ENCODE measurements at regions of chr7 and their contacts with region 1.

Region 1: DNA sequence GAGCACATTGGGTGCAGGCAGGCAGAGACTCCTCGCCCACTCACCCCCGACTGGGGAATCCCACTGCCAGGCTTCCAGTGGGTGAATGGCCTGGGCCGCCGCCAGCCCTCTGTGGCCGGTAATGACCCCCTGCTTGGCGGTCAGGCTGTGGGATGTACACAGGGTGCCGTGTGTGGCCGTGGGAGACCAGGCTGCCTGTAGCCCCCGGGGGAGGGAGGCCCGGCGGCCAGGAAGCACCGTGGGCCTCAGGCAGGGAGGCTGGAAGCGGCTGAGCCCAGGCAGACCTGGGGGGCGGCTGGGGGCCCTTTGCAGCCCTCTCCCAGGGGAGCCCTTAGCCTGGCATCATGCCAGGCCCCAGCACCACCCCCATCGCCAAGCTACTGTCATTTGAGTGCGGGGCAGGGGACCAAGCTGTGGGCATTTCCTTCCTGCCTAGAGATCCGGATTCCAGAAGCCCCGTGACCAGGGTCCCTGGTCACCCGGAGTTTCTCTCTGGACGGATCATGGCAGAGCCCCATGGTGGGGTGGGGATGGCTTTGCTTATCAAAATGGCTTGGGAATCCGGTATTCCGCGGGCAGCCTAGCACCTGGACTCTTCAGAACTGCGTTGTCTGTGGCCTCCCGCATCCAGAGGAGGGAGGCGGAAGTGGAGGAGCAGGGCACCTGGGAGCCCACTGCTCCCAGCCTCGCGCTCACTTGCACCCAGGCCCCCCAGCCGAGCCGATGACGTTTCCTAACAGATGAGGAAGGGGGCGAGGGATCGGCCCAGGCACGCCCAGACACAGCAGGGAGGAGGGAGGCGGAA is 1.1 kb downstream of the TTYH3 start:
- DNase-seq: no peak
- H3K4me3 ChIP-seq: peak overlapping the region; percentile 59 to 99 (median 82)
- H3K27ac ChIP-seq: 0 out of 2 replicates have a peak overlapping the region, but pooled peaks have one; percentile 12
- H3K4me1 ChIP-seq: peaks cover 0 to 29% (median 13%) of the 10 kb centered on the region in 4 experiments; a peak in 6 of 7 replicates
- H3K27me3 ChIP-seq: no peaks in the 10 kb centered on the region
- CTCF ChIP-seq: no peak
- EP300 ChIP-seq: no peak
- POLR2A ChIP-seq: no peak
- RAD21 ChIP-seq: no peak

Region 2: DNA sequence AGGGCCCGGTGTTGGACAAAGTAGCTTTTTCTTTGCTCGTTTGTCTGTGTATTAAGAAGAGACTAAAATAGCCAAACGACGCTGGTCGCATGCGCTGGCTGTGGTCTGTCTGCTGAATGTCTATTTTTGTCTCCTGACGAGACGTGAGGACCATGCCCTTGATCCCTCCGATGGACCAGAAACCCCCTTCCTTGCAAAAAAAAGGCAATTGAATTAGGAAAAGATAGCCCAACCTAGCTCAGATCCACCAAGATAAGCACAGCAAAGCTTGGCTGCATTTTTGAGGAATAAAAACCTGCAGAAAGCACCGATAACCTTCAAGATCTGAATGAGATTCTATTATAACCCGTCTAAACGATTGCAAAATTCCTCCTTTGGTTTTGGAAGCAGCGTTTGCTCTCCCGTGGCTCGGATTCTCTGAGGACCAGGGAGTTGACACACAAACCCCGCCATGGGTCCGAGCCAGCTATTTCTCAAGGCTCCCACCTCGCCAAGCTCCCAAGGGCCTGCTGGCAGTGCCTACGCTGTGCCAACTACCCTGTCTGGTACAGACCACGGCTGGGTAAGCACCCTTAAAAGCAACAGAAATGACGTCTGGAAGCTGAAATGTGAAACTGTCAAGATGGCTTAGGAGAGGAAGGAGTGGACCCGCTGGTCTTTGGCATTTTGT is 18.9 kb before region 1 on chr7:
- CTCF ChIA-PET with region 1: interaction called, 25 read pairs
- POLR2A ChIA-PET with region 1: interaction called, 48 read pairs
- DNase-seq: no peak
- H3K4me3 ChIP-seq: no peak overlapping the region
- H3K27ac ChIP-seq: no peak overlapping the region
- H3K4me1 ChIP-seq: peaks cover 0 to 32% (median 17%) of the 10 kb centered on the region in 4 experiments; a peak in 6 of 7 replicates
- H3K27me3 ChIP-seq: 0 out of 7 replicates have a peak, but pooled peaks cover 0 to 2% (median 0%) of the 10 kb centered on the region in 4 experiments
- CTCF ChIP-seq: no peak
- EP300 ChIP-seq: no peak
- POLR2A ChIP-seq: no peak
- RAD21 ChIP-seq: no peak

Region 3: DNA sequence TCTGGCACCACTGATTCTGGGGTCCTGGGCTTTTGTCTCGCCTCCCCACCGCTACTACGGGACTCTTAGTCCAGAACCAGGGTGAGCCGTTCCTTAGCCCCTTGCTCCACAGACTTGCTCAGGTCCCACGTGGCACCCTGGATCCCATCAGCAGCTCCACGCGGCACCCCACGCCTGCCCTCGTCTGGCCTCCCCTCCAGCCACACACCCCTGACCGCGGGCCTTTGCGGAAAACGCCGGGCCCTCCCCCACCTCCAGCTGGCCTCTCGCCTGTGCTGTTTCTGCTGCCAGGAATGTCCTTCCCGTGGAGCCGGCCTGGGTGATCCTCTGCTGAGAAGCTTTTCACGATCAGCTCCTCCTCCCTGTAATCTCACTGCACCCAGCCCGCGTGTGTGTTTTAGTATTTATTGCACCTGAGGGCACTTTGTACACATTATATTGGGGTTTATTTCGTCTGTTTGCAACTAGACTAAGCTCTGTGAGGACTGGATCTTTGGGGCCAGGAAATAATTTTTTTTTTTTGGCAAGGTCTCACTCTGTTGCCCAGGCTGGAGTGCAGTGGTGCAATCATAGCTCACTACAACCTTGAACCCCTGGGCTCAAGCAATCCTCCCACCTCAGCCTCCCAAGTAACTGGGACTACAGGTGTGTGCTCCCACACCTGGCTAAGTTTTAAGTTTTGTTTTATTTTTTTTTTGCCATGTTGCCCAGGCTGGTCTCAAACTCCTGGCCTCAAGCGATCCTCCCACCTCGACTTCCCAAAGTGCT is 11.7 kb before region 1 on chr7:
- CTCF ChIA-PET with region 1: interaction called, 5 read pairs
- POLR2A ChIA-PET with region 1: interaction called, 48 read pairs
- DNase-seq: peak in 1 of 2 experiments; percentile 70
- H3K4me3 ChIP-seq: peak overlapping the region in 1 of 4 experiments; percentile 23; a peak in 1 of 8 replicates
- H3K27ac ChIP-seq: no peak overlapping the region
- H3K4me1 ChIP-seq: peaks cover 0 to 37% (median 23%) of the 10 kb centered on the region in 4 experiments; a peak in 6 of 7 replicates
- H3K27me3 ChIP-seq: 0 out of 7 replicates have a peak, but pooled peaks cover 0 to 2% (median 0%) of the 10 kb centered on the region in 4 experiments
- CTCF ChIP-seq: no peak
- EP300 ChIP-seq: no peak
- POLR2A ChIP-seq: no peak
- RAD21 ChIP-seq: no peak

Region 4: GRCh38 chr7:2660585-2661408 is 27.9 kb after region 1 on chr7:
- CTCF ChIA-PET with region 1: interaction called, 3 read pairs
- POLR2A ChIA-PET with region 1: interaction called, 12 read pairs
- DNase-seq: peak in 1 of 2 experiments; percentile 71
- H3K4me3 ChIP-seq: no peak overlapping the region
- H3K27ac ChIP-seq: no peak overlapping the region
- H3K4me1 ChIP-seq: peaks cover 0 to 4% (median under 1%) of the 10 kb centered on the region in 4 experiments; a peak in 2 of 7 replicates
- H3K27me3 ChIP-seq: no peaks in the 10 kb centered on the region; a peak in 2 of 7 replicates
- CTCF ChIP-seq: peak in 2 of 3 experiments; percentile 50 to 60; a peak in 3 of 4 replicates
- EP300 ChIP-seq: no peak
- POLR2A ChIP-seq: no peak
- RAD21 ChIP-seq: peak; percentile 34 to 48; a peak in 3 of 4 replicates

Region 5: DNA sequence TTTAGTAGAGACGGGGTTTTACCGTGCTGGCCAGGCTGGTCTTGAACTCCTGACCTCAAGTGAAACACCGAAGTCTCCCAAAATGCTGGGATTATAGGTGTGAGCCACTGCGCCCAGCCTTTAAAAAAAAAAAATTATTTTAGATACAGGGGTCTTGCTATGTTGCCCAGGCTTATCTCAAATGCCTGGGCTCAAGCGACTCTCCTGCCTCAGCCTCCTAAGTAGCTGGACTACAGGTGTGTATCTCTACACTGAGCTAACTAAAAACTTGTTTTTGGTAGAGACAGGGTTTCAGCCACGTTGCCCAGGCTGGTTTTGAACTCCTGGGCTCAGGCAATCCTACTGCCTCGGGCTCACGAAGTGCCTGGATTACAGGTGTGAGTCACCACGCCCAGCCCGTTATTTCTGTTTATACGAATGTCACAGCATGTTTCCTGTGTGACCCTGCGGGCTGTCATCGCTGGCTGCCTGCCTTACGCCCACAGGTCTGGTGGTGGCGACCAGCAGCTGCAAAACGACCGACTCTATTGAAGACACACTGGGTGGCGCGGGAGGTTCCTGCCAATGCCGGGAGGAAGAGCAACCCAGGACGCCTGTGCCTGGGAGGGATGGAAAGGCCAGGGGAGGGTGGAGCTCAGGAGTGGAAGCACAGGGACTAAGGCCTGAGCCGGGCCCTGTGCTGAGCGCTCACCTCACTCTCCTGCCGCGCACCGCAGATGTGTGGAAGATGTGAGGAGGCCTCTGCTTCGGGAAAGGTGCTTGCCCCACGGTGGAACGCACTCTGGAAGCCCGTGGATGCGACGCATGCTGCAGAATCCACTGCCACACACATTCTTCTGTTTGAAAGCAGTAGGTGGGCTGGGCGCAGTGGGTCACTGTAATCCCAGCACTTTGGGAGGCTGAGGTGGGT is 87.9 kb after region 1 on chr7:
- CTCF ChIA-PET with region 1: no interaction called
- POLR2A ChIA-PET with region 1: no interaction called
- DNase-seq: no peak
- H3K4me3 ChIP-seq: no peak overlapping the region
- H3K27ac ChIP-seq: no peak overlapping the region
- H3K4me1 ChIP-seq: no peaks in the 10 kb centered on the region; a peak in 4 of 7 replicates
- H3K27me3 ChIP-seq: no peaks in the 10 kb centered on the region
- CTCF ChIP-seq: peak in 2 of 3 experiments; percentile 6 to 14; a peak in 2 of 4 replicates
- EP300 ChIP-seq: no peak
- POLR2A ChIP-seq: no peak
- RAD21 ChIP-seq: peak in 1 of 2 experiments; percentile 40; a peak in 2 of 4 replicates

Measured in H1 (cell line).